Activated T-helper 2 cell treated with anti-CD3 and anti-CD28 coated beads, Interferon-gamma antibody, Interleukin-2, Interleukin-4, amounts not matched to agents 10 μg/mL and 5 μg/mL and 100 μg/mL, durations not matched to agents 14 hours and 24 hours and 36 hours (primary cell): ENCODE measurements at regions of chr12 and their contacts with region 1.

Region 1: GRCh38 chr12:31959161-31959700 is at the start of gene RESF1:
- DNase-seq: peak; percentile 88
- H3K4me3 Mint-ChIP-seq: peak within 1 kb of the TSS; percentile 93
- H3K27ac Mint-ChIP-seq: peak within 1 kb of the TSS; percentile 98
- H3K4me1 Mint-ChIP-seq: peaks cover 63% of the 10 kb centered on the region
- H3K27me3 Mint-ChIP-seq: no peaks in the 10 kb centered on the region
- total RNA-seq, gene RESF1: 41.9 and 43.2 TPM in 2 replicates

Region 2: GRCh38 chr12:31477687-31478086 is 481.5 kb before region 1 on chr12:
- intact Hi-C with region 1: no loop called
- DNase-seq: no peak
- H3K4me3 Mint-ChIP-seq: no peak overlapping the region
- H3K27ac Mint-ChIP-seq: no peak overlapping the region
- H3K4me1 Mint-ChIP-seq: peaks cover 3% of the 10 kb centered on the region
- H3K27me3 Mint-ChIP-seq: peaks cover 6% of the 10 kb centered on the region

Region 3: DNA sequence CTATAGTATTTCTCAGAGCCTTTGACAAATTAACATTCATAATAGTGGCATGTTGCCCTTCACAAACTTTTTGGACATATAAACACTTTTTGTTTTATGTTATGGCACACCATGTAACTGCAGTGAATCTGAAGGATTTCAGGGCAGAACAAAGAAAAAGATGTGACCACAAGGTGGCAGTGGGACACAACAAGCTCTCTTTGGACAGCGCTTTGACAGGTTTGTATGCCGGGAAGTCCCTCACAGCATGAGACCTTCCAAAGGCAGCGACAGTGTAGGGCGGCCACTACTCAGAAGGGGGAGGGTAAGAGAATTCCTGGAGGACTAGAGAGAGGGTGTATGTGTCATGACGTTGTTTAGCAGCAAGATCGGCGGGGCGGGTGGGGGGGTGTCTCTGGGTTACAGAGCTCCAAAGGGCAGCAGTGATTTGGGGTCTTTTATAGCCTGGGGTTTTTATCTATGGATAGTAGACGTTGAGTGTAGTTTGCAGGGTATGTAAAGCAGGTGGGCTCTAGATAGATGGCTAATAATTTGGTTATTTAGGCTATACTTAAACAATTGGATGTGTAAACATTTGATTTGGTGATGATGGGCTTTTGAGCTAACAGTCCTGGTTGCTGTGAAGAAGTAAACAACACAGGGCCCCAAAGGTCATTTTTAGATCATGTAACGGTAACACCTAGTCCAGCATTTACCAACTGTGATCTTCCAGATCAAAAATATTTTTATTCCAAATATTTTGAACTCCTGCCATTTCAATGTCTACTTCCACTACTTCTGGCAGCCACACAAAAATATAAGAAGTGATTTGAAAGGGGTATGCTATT is 276.9 kb before region 1 on chr12:
- intact Hi-C with region 1: loop called (anchors 5 kb)
- DNase-seq: peak; percentile 46
- H3K4me3 Mint-ChIP-seq: no peak overlapping the region
- H3K27ac Mint-ChIP-seq: no peak overlapping the region
- H3K4me1 Mint-ChIP-seq: peaks cover 5% of the 10 kb centered on the region
- H3K27me3 Mint-ChIP-seq: no peaks in the 10 kb centered on the region

Region 4: GRCh38 chr12:31804185-31804504 is 155.1 kb before region 1 on chr12:
- intact Hi-C with region 1: loop called (anchors 5 kb)
- DNase-seq: no peak
- H3K4me3 Mint-ChIP-seq: peak overlapping the region; percentile 30
- H3K27ac Mint-ChIP-seq: peak overlapping the region; percentile 40
- H3K4me1 Mint-ChIP-seq: peaks cover 28% of the 10 kb centered on the region
- H3K27me3 Mint-ChIP-seq: peaks cover 3% of the 10 kb centered on the region

Region 5: GRCh38 chr12:31914927-31915326 is 44.3 kb before region 1 on chr12:
- intact Hi-C with region 1: no loop called
- DNase-seq: no peak
- H3K4me3 Mint-ChIP-seq: no peak overlapping the region
- H3K27ac Mint-ChIP-seq: no peak overlapping the region
- H3K4me1 Mint-ChIP-seq: no peaks in the 10 kb centered on the region
- H3K27me3 Mint-ChIP-seq: no peaks in the 10 kb centered on the region

Region 6: DNA sequence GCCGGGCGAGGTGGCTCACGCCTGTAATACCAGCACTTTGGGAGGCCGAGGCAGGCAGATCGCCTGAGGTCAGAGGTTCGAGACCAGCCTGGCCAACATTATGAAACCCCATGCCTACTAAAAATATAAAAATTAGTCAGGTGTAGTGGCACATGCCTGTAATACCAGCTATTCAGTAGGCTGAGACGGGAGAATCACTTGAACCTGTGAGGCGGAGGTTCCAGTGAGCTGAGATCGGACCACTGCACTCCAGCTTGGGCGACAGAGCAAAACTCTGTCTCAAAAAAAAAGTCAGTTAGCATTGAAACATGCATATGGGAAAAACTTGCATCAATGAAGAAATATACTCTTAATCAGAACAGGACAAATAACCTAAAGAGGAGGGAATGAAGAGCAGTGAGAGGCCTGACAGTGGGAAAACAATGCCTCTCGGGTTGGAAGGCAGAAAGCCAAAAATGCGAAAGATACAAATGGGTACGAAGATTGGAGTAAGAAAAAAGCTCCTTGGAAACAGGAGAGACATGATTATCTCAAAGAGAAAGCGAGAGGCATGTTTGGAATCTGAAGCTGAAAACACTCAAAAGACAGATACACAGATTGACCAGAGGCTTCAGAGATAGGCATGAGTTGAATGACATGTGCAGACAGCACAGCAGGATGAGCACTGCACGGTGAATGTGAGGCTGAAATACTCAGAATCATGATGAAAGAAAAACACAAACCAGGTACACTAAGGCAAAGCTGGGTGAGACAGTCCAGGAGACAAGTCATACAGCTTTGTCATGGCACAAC is 30.5 kb after region 1 on chr12:
- intact Hi-C with region 1: loop called (anchors 2 kb)
- DNase-seq: no peak
- H3K4me3 Mint-ChIP-seq: peak overlapping the region; percentile 5
- H3K27ac Mint-ChIP-seq: peak overlapping the region; percentile 69
- H3K4me1 Mint-ChIP-seq: peaks cover 41% of the 10 kb centered on the region
- H3K27me3 Mint-ChIP-seq: no peaks in the 10 kb centered on the region

Region 7: DNA sequence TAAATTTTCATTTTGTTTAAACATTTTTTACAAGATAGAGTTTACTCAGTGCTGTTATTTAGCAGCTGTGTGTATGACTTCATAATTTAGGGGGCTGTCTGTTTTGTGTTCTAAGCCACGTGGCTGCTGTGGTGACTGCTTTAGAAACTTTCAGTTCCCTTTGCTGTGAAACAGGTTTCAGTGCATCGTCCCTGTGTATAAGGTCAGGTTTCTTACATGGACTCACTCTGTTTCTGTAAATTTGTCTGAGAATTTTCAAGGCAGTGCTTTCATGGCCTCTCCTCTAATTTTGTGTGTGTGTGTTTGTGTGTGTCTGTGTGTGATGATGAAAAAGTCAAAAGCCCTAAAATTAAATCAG is 179.8 kb after region 1 on chr12:
- intact Hi-C with region 1: loop called (anchors 5 kb)
- DNase-seq: peak; percentile 16
- H3K4me3 Mint-ChIP-seq: peak overlapping the region; percentile 47
- H3K27ac Mint-ChIP-seq: no peak overlapping the region
- H3K4me1 Mint-ChIP-seq: peaks cover 24% of the 10 kb centered on the region
- H3K27me3 Mint-ChIP-seq: peaks cover 56% of the 10 kb centered on the region

Region 8: DNA sequence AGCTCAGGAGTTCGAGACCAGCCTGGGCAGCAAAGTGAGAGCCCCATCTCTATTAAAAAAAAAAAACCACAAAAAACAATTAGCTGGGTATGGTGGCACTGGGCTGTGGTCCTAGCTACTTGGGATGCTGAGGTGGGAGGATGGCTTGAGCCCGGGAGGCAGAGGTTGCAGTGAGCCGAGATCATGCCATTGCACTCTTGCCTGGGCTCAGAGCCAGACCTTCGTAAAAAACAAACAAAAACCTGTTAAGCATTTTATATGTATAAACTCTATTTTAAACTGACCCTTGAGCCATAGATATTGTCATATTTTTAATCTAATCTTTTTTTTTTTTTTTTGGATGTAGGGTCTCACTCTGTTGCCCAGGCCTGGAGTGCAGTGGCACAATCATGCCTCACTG is 755.5 kb after region 1 on chr12:
- intact Hi-C with region 1: no loop called
- DNase-seq: no peak
- H3K4me3 Mint-ChIP-seq: no peak overlapping the region
- H3K27ac Mint-ChIP-seq: no peak overlapping the region
- H3K4me1 Mint-ChIP-seq: peaks cover 11% of the 10 kb centered on the region
- H3K27me3 Mint-ChIP-seq: no peaks in the 10 kb centered on the region